ENCODE measurements at regions of chr10 and their contacts with region 1.

Region 1: GRCh38 chr10:122051251-122051996 is 62.5 kb downstream of the TACC2 start:
- DNase-seq: no peak
- H3K4me3 ChIP-seq: no peak overlapping the region
- H3K27ac ChIP-seq: peak overlapping the region; percentile 61 to 87 (median 68)
- H3K4me1 ChIP-seq: peaks cover 30 to 51% (median 38%) of the 10 kb centered on the region in 4 donors
- H3K27me3 ChIP-seq: no peaks in the 10 kb centered on the region
- CTCF ChIP-seq: peak; percentile 62 to 79 (median 75)
- EP300 ChIP-seq: no peak
- POLR2A ChIP-seq: no peak

Region 2: DNA sequence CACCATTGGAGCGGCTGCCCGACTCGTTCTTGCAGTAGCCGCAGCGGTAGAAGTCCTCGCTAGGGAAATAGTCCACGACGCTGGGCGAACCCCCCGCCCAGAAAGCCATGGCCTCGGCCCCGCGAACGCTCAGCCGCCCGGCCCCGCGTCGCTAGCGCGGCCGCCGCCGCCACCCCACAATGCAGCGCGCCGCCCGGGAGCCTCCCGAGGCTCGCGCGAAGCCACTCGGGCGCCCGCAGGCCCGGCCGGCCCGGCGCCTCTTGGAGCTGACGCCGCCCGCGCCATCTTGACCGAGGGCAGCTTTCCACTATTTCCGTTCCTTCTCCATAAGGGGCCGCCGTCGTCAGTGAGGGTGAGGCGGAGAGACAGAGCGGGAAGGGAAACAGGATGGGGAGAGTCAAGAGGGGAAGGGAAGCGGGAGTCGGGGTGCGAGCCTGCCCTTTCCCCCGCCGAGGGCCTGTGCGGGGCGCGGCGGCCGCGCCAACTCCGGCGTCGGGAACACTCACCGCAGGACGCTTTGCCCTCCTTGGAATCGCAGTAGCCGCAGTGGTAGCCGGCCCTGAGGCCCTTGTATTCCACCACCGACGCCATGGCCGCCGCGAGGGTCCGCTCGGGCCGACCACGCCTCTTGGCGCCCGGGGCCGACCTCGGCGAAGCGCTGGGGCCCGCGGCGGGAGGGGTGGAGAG is 123.4 kb before region 1 on chr10 and contains the start of gene ATE1:
- intact Hi-C with region 1: loop called (anchors 5 kb)
- DNase-seq: peak; percentile 96
- H3K4me3 ChIP-seq: peak within 1 kb of the TSS; percentile 96 to 100 (median 99)
- H3K27ac ChIP-seq: peak within 1 kb of the TSS; percentile 99 to 100 (median 100)
- H3K4me1 ChIP-seq: peaks cover 15 to 42% (median 31%) of the 10 kb centered on the region in 4 donors
- H3K27me3 ChIP-seq: no peaks in the 10 kb centered on the region
- CTCF ChIP-seq: peak in 2 of 3 experiments; percentile 8 to 30
- EP300 ChIP-seq: no peak
- POLR2A ChIP-seq: peak; percentile 20
- total RNA-seq, gene ATE1: 27.8 to 29.5 (median 28.4) TPM

Region 3: DNA sequence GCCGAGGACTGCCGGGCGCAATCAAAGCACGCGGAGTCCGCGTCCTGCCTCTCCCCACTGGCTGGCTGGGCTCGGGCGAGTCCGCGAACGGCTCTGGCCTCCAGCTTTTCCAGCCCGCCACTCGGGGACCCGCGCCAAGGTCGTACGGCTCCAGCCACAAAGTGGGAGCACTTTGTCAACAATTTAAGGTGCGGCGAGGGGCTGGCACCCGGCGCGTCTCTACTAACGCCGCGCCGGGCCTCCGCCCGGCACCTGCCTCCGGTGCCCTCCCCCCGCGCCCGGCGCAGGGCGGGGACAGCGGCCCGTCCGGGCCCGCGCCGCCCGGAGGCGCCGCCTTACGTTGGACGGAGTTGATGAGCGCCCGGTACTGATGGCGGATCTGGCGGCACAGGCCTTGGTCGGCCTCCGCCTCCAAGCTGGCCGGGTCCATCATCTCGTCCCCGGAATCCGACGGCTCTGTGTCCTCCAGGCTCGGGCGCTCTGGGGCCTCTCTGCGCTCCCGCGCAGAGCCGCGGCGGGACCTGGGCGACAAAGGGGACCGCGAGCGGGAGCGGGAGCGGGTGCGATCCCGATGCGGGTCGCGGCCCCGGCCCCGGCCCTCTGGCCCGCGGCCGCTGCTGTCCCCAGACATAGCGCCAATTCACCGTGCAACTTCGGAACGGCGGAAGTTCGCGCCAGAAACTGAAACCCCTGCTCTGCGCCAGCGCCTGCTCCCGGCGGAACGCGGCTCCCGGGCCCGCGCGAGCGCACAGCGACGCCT is 76.7 kb before region 1 on chr10 and contains the start of gene NSMCE4A:
- intact Hi-C with region 1: loop called (anchors 5 kb)
- DNase-seq: no peak
- H3K4me3 ChIP-seq: peak within 1 kb of the TSS; percentile 75 to 96 (median 90)
- H3K27ac ChIP-seq: peak within 1 kb of the TSS; percentile 95 to 99 (median 99)
- H3K4me1 ChIP-seq: peaks cover 19 to 35% (median 34%) of the 10 kb centered on the region in 4 donors
- H3K27me3 ChIP-seq: no peaks in the 10 kb centered on the region
- CTCF ChIP-seq: no peak
- EP300 ChIP-seq: no peak
- POLR2A ChIP-seq: peak; percentile 8
- total RNA-seq, gene NSMCE4A: 63.9 to 96.8 (median 82.0) TPM

Region 4: GRCh38 chr10:121994390-121994961 is 56.9 kb before region 1 on chr10:
- intact Hi-C with region 1: loop called (anchors 2 kb)
- DNase-seq: no peak
- H3K4me3 ChIP-seq: peak overlapping the region; percentile 28 to 39 (median 34)
- H3K27ac ChIP-seq: peak overlapping the region; percentile 82 to 89 (median 84)
- H3K4me1 ChIP-seq: peaks cover 3 to 69% (median 49%) of the 10 kb centered on the region in 4 donors
- H3K27me3 ChIP-seq: no peaks in the 10 kb centered on the region
- CTCF ChIP-seq: peak in 1 of 3 experiments; percentile 15
- EP300 ChIP-seq: no peak
- POLR2A ChIP-seq: peak; percentile 47

Region 5: GRCh38 chr10:122112625-122113160 is 61.3 kb after region 1 on chr10:
- intact Hi-C with region 1: loop called (anchors 2 kb)
- DNase-seq: peak; percentile 95
- H3K4me3 ChIP-seq: peak overlapping the region; percentile 69 to 88 (median 80)
- H3K27ac ChIP-seq: peak overlapping the region; percentile 95 to 100 (median 98)
- H3K4me1 ChIP-seq: peaks cover 45 to 52% (median 48%) of the 10 kb centered on the region in 4 donors
- H3K27me3 ChIP-seq: no peaks in the 10 kb centered on the region
- CTCF ChIP-seq: peak; percentile 55 to 68 (median 64)
- EP300 ChIP-seq: peak; percentile 69
- POLR2A ChIP-seq: peak; percentile 59

Region 6: DNA sequence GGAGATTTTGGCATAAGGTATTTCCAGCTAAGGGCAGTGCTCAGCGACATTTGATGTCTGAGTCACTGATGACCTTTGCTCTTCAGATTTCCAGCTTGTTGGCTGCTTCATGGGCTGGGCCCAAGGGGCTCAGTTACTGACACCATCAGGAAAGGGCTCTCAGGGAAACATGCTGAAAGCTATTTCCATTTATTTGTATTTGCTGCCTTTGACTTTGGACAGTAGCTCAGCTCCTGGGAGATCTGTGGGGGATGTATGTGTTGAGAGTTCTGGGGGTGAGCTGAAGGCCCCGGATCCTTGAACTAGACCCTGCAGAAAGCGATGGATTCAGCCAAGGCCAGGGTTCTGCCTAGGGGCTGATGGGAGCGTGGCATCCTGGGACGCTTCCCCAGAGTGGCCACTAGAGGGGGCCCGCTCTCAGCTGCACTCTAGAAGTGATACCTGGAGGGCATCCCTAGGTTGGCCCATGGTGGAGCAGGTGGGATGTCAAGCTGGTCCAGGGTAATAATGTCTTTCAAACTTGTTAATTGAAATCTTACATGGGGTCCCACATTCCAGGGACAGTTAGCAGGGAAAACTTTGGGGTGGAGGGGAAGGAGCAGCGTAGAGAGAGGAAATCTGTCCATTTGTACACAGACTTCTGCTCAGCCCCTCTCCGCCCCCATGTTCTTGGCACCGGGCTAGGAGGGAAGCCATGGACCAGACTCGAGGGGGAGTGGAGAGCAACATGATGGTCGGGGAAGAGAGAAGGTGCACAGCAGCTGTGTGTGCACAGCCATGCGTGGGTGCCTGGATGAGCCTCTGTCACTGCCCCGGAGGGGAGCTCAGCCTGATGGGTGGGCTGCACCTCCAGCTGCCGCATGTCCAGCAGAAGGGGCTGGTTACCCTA is 216.7 kb after region 1 on chr10:
- intact Hi-C with region 1: loop called (anchors 10 kb)
- DNase-seq: no peak
- H3K4me3 ChIP-seq: no peak overlapping the region
- H3K27ac ChIP-seq: no peak overlapping the region
- H3K4me1 ChIP-seq: peaks cover 16 to 17% (median 17%) of the 10 kb centered on the region in 4 donors
- H3K27me3 ChIP-seq: no peaks in the 10 kb centered on the region
- CTCF ChIP-seq: peak; percentile 66 to 98 (median 78)
- EP300 ChIP-seq: no peak
- POLR2A ChIP-seq: no peak

Measured in esophagus muscularis mucosa (tissue), 4 donors.